Dorsolateral prefrontal cortex (tissue), 120 donors: ENCODE measurements at regions of chrX and their contacts with region 1.

Region 1: DNA sequence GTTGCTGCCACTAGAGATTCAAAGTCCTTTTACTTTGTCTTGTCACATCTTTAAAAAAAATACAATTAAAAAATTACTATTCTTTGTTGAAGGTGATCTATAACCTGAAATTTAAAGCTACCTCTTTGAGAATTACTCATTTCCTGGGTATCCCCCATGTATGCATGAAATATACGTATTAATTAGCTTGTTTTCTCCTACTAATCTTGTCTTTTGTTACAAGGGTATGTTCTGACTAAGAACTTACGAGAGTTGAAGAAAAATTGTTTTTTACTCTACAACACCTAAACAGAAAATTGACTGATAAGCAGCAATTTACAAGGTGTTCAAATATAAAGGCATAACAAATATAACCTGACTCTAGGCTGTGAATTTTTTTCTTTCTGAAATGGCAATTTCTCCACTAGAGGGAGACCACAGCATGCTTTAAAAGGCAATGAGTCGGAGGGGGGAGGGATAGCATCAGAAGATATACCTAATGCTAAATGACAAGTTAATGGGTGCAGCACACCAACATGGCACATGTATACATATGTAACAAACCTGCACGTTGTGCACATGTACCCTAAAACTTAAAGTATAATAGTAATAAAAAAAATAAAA is 249.6 kb downstream of the OPHN1 start:
- DNase-seq: no peak
- H3K4me3 ChIP-seq: no peak overlapping the region
- H3K27ac ChIP-seq: no peak overlapping the region
- H3K27me3 ChIP-seq: peaks cover 0 to 69% (median 13%) of the 10 kb centered on the region in 45 donors
- CTCF ChIP-seq: peak in 47 of 56 donors; percentile 9 to 63 (median 38)

Region 2: GRCh38 chrX:68710870-68711576 is 527.3 kb after region 1 on chrX:
- intact Hi-C with region 1: loop called in 1 of 2 experiments (anchors 10 kb)
- DNase-seq: no peak
- H3K4me3 ChIP-seq: no peak overlapping the region
- H3K27ac ChIP-seq: no peak overlapping the region
- H3K27me3 ChIP-seq: peaks cover 0 to 74% (median 6%) of the 10 kb centered on the region in 45 donors
- CTCF ChIP-seq: peak in 31 of 56 donors; percentile 9 to 52 (median 25)